Gastrocnemius medialis (tissue), 4 donors: ENCODE measurements at regions of chr9 and their contacts with region 1.

Region 1: DNA sequence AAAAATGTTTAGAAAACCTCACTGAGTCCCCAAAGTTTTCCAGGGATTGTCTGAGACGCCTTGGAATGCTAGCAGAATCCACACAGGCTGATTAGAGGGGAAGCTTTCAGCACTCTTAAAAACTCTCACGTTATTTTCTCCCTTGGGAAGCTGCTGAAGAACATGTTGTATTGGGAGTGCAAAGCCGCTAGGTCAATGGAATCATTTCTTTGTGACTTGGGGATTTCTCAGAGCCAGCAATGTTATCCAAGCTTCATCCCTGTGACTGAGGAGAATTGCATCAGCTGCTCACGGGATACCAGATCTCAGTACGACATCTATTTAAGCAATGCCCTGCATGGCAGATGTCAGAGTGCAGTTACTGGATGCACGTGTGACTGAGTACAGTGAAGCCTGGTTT is 426.4 kb upstream of the MPDZ start:
- DNase-seq: peak; percentile 86
- ATAC-seq: peak; percentile 100
- H3K4me3 ChIP-seq: no peak overlapping the region
- H3K27ac ChIP-seq: peak overlapping the region; percentile 59 to 75 (median 72)
- H3K4me1 ChIP-seq: peaks cover 10 to 11% of the 10 kb centered on the region in 2 donors
- H3K27me3 ChIP-seq: no peaks in the 10 kb centered on the region
- CTCF ChIP-seq: no peak
- POLR2A ChIP-seq: peak in 1 of 2 donors; percentile 14

Region 2: DNA sequence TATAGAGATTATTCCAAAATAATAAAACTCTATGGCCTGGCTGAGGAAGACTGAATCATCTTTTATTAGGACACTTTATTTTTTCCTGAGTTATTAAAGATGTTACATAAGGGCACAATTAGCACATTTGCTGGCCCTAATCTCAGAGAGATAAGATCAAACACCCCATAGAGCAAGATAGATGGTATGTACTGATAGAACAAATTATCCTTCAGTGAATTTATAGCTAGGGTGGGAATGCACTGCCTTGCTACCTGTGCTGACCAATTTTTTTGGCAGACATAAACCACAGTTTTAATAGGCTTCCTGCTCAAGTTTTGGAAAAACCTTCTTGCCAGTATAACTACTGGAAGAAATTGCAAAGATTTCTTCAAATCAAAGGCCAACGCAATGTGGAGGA is 59.4 kb before region 1 on chr9:
- in situ Hi-C with region 1: no loop called
- intact Hi-C with region 1: no loop called
- DNase-seq: no peak
- ATAC-seq: no peak
- H3K4me3 ChIP-seq: no peak overlapping the region
- H3K27ac ChIP-seq: no peak overlapping the region
- H3K4me1 ChIP-seq: peaks cover 0 to 7% of the 10 kb centered on the region in 2 donors
- H3K27me3 ChIP-seq: no peaks in the 10 kb centered on the region
- CTCF ChIP-seq: no peak
- POLR2A ChIP-seq: no peak

Region 3: DNA sequence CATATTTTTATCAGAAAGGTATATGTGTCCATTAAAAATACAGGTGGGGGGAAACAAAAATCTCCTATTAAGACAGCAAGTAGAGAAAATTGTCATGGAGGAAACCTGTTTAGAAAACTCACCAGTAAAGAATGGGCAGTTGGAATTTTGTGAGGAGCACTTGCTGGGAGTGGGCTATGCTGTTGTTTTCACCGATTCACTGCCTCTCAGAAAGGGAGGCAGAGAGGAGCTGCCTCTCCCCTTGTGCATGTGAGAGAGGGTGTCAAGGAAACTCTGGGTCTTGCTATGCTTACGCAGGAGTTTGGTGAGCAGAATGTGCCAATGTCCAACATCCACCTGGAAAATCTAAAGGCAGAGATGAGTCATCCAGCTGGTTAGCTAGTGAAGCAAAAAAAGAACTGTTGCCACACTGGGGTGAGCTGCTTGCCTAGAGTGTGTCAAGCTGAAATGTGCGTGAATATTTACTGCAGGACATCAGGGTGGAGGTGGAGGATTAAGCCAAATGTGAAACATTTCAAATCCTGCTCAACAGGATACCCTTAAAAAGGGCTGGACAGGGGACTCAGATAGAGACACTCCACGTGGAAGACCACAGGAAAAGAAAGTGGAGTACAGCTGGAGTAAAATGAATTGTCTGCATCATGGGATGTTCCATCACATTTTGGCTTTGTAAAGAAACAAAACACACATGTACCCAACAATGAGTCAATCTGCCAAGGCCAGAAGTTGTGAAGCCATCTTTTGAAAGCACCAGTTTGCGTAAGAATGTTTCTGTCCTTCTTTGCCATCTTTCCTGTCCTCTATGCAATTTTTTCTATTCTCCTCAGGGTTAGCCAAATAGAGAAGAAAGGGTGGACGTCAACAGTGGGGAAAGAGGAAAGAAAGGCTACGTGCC is 23.2 kb after region 1 on chr9:
- in situ Hi-C with region 1: no loop called
- intact Hi-C with region 1: loop called (anchors 1 kb)
- DNase-seq: peak; percentile 64 to 71
- ATAC-seq: peak; percentile 91 to 94
- H3K4me3 ChIP-seq: no peak overlapping the region
- H3K27ac ChIP-seq: peak overlapping the region; percentile 65 to 83 (median 73)
- H3K4me1 ChIP-seq: peaks cover 14 to 21% of the 10 kb centered on the region in 2 donors
- H3K27me3 ChIP-seq: no peaks in the 10 kb centered on the region
- CTCF ChIP-seq: no peak
- POLR2A ChIP-seq: peak; percentile 50 to 60

Region 4: GRCh38 chr9:13841746-13842462 is 136.0 kb after region 1 on chr9:
- in situ Hi-C with region 1: no loop called
- intact Hi-C with region 1: loop called (anchors 5 kb)
- DNase-seq: peak; percentile 4 to 29
- ATAC-seq: peak; percentile 86 to 91
- H3K4me3 ChIP-seq: no peak overlapping the region
- H3K27ac ChIP-seq: peak overlapping the region; percentile 65 to 77 (median 66)
- H3K4me1 ChIP-seq: peaks cover 12 to 17% of the 10 kb centered on the region in 2 donors
- H3K27me3 ChIP-seq: no peaks in the 10 kb centered on the region
- CTCF ChIP-seq: no peak
- POLR2A ChIP-seq: no peak

Region 5: GRCh38 chr9:14221558-14221957 is 515.6 kb after region 1 on chr9:
- in situ Hi-C with region 1: loop called in 1 of 4 experiments (anchors 25 kb)
- intact Hi-C with region 1: no loop called
- DNase-seq: no peak
- ATAC-seq: peak; percentile 51 to 95
- H3K4me3 ChIP-seq: no peak overlapping the region
- H3K27ac ChIP-seq: peak overlapping the region in 3 of 4 donors; percentile 27 to 60 (median 51)
- H3K4me1 ChIP-seq: peaks cover 37 to 40% of the 10 kb centered on the region in 2 donors
- H3K27me3 ChIP-seq: no peaks in the 10 kb centered on the region
- CTCF ChIP-seq: no peak
- POLR2A ChIP-seq: no peak

Region 6: DNA sequence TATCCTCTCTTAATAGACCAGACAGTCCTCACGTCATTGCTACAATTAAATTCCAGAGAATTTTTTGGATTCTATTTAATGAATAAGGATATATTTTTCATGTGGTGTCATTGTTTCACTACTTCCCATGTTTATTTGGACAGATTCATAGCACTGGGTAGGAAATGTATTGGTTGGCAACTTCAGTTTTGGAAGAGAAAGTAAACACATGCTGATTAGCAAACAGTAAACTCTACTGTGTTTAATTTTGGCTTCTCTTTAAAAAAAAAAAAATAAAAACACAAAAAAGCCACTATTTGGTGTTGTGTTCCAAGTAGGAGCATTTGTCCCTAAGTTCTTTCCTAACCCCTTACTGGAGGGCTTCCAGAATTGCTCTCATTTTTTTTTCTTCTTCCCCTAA is 530.7 kb after region 1 on chr9:
- in situ Hi-C with region 1: no loop called
- intact Hi-C with region 1: no loop called
- DNase-seq: no peak
- ATAC-seq: no peak
- H3K4me3 ChIP-seq: no peak overlapping the region
- H3K27ac ChIP-seq: peak overlapping the region; percentile 13 to 74 (median 61)
- H3K4me1 ChIP-seq: peaks cover 54 to 63% of the 10 kb centered on the region in 2 donors
- H3K27me3 ChIP-seq: no peaks in the 10 kb centered on the region
- CTCF ChIP-seq: no peak
- POLR2A ChIP-seq: no peak

Region 7: GRCh38 chr9:14322211-14323082 is 616.5 kb after region 1 on chr9:
- in situ Hi-C with region 1: loop called in 1 of 4 experiments (anchors 25 kb)
- intact Hi-C with region 1: loop called (anchors 5 kb)
- DNase-seq: peak; percentile 86 to 92
- ATAC-seq: peak; percentile 67 to 76
- H3K4me3 ChIP-seq: peak overlapping the region; percentile 69 to 79 (median 77)
- H3K27ac ChIP-seq: peak overlapping the region; percentile 92 to 99 (median 98)
- H3K4me1 ChIP-seq: peaks cover 70 to 84% of the 10 kb centered on the region in 2 donors
- H3K27me3 ChIP-seq: no peaks in the 10 kb centered on the region
- CTCF ChIP-seq: peak; percentile 59 to 77 (median 66)
- POLR2A ChIP-seq: peak; percentile 62 to 78